Ascending aorta (tissue), 2 donors: ENCODE measurements at regions of chr1 and their contacts with region 1.

Region 1: GRCh38 chr1:201559679-201560162 is 20.8 kb downstream of the NAV1 start:
- DNase-seq: peak in 1 of 2 donors; percentile 86
- H3K4me3 ChIP-seq: no peak overlapping the region
- H3K27ac ChIP-seq: no peak overlapping the region
- H3K4me1 ChIP-seq: peaks cover 0 to 18% of the 10 kb centered on the region in 2 donors
- H3K27me3 ChIP-seq: no peaks in the 10 kb centered on the region
- CTCF ChIP-seq: peak; percentile 89 to 96 (median 89)

Region 2: DNA sequence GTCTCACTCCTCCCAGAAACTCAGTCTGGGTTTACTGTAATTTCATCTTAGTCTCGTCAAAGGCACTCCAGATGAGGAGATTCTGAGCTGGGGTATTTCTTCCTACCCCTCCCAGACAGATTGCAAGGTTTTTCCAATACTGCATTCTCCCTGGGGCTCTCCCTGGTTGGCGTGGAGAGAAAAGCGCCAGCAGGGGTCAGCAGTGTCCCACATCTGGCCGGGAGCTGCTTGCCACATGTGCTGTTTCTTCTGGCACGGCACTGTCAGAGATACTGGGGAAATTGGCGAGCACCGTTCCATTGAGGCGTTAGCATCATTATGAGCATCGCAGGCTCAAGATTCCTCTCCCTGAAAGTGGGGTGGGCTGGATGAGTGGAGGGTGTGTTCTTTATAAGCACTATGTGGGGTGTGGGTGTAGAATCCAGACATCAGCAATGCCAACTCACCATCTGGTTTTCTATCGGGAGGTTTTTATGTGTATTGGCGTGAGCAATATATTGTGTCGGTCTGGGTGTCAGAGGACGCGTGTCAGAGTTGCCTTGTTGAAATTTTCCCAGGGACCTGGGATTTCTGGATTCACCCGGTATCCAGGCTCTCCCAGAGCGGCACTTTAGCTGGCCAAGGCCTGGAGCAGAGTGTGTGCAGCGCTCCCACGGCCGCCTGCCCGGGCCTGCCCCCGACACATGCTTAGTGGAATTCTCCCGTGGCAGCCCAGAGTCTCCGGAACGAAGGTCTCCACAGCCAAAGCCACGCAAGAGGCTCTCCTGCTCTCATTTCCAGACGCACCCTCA is 28.8 kb before region 1 on chr1:
- intact Hi-C with region 1: loop called (anchors 1 kb)
- DNase-seq: peak; percentile 51 to 95
- H3K4me3 ChIP-seq: no peak overlapping the region
- H3K27ac ChIP-seq: peak overlapping the region; percentile 51 to 59
- H3K4me1 ChIP-seq: peaks cover 20 to 45% of the 10 kb centered on the region in 2 donors
- H3K27me3 ChIP-seq: no peaks in the 10 kb centered on the region
- CTCF ChIP-seq: peak; percentile 89 to 96 (median 93)

Region 3: DNA sequence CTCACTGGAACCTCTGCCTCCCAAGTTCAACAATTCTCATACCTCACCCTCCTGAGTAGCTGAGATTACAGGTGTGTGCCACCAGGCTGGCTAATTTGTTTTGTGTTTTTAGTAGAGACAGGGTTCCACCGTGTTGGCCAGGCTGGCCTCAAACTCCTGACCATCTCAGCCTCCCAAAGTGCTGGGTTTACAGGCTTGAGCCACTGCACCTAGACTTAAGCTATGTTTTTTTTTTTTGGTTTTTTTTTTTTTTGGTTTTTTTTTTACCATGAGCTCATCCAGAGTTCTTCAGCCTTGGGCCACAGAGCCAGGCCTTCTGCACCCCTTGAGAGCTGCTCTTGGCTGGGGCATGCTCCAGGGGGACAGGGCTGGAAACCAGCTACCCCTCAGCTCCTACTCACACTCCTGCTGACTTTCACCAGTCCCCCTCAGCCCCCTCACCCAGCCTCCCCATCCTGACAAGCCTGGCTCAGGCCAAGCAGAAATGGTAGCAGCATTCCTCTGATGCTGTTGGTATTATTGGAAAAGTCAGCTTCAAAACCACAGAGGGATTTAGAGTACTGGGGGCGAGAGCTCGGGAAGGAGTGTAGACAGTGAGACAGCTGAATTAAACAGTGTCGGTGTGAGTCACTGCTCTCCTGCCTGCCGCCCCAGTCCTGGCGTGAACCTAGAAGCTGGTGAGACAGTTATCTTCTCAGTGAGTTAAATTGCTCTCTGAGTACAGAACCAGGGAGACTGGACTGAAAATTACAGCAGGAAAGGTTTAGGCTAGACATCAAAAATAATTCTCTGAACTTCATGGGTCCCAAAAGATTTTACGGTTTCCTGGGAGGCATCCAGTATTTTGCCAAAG is 42.9 kb after region 1 on chr1:
- intact Hi-C with region 1: loop called (anchors 5 kb)
- DNase-seq: peak in 1 of 2 donors; percentile 70
- H3K4me3 ChIP-seq: no peak overlapping the region
- H3K27ac ChIP-seq: peak overlapping the region; percentile 48 to 53
- H3K4me1 ChIP-seq: peaks cover 5 to 15% of the 10 kb centered on the region in 2 donors
- H3K27me3 ChIP-seq: no peaks in the 10 kb centered on the region
- CTCF ChIP-seq: no peak

Region 4: DNA sequence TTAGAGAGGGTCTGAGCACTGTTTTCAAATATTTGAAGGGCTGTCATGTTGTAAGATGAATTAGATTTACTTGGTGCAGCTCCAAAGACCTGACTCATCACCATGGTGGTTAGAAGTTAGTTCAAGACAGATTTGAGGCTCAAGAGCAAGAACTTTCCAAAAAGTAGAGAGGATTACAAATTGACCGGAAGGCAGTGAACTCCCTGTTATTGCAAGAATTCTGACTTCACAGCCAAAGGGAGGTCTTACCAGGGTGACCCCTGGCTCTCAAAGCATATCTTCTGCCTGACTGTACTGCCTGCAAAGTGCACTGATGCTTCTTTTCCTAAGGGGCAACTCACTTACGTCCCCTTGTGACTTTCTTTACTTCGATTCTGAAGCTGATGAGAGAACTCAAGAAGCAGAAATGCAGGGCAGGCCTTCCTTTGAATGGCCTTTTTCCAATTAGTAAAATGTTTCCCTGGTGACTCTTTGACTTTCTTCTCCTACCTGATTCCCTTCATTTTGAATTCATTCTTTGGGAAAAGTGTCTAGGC is 65.6 kb after region 1 on chr1:
- intact Hi-C with region 1: loop called (anchors 5 kb)
- DNase-seq: no peak
- H3K4me3 ChIP-seq: no peak overlapping the region
- H3K27ac ChIP-seq: peak overlapping the region; percentile 23 to 63
- H3K4me1 ChIP-seq: peaks cover 12 to 45% of the 10 kb centered on the region in 2 donors
- H3K27me3 ChIP-seq: no peaks in the 10 kb centered on the region
- CTCF ChIP-seq: no peak

Region 5: GRCh38 chr1:201637680-201638079 is 78.0 kb after region 1 on chr1:
- intact Hi-C with region 1: no loop called
- DNase-seq: no peak
- H3K4me3 ChIP-seq: no peak overlapping the region
- H3K27ac ChIP-seq: no peak overlapping the region
- H3K4me1 ChIP-seq: peaks cover 4 to 16% of the 10 kb centered on the region in 2 donors
- H3K27me3 ChIP-seq: no peaks in the 10 kb centered on the region
- CTCF ChIP-seq: no peak

Region 6: GRCh38 chr1:201649761-201650622 is 90.3 kb after region 1 on chr1:
- intact Hi-C with region 1: loop called (anchors 5 kb)
- DNase-seq: peak in 1 of 2 donors; percentile 80
- H3K4me3 ChIP-seq: peak overlapping the region; percentile 61 to 70
- H3K27ac ChIP-seq: peak overlapping the region; percentile 28 to 32
- H3K4me1 ChIP-seq: peaks cover 20 to 26% of the 10 kb centered on the region in 2 donors
- H3K27me3 ChIP-seq: no peaks in the 10 kb centered on the region
- CTCF ChIP-seq: no peak

Region 7: DNA sequence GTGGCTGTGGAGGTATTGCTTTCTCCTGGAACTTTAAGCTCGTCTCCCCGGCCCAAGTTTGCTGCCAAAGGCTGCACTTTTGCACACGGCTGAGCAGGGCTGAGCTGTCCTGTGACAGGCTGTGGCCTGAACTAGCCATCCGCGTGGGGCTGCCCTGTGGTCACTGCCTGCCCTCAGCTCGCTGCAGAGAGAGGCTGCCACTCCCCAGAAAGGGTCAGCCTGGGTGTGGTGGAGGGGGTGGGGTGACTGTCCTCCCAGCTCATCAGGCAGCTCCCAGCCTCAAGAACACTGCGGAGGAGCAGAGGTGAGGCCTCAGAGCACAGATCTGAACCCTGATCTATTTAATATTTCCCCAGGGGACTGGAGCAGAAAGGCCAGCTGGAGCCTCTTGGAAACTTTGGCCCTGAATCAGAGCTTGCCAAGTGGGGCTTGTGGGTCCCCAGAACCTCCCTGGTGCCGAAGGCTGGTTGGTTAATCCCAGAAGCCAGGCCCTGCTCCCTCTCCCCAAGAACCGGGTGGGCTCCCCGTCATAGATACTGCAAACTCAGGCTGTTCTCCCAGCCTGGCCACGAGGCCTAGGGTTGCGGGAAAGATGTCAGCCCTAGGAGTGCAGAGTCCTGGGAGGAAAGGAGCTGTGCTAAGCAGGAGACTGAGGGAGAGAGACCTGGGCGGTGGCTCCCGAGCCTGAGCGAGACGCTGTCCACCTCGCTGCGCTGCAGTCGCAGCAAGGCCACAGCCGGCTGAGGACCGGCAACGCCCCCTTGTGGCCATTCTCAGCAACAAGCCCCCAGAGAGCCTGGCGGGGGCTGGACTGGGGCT is 144.1 kb after region 1 on chr1:
- intact Hi-C with region 1: loop called (anchors 1 kb)
- DNase-seq: peak in 1 of 2 donors; percentile 89
- H3K4me3 ChIP-seq: no peak overlapping the region
- H3K27ac ChIP-seq: peak overlapping the region; percentile 57 to 61
- H3K4me1 ChIP-seq: peaks cover 3 to 14% of the 10 kb centered on the region in 2 donors
- H3K27me3 ChIP-seq: no peaks in the 10 kb centered on the region
- CTCF ChIP-seq: peak; percentile 95 to 97 (median 96)

Region 8: GRCh38 chr1:201792534-201793305 is 233.0 kb after region 1 on chr1:
- intact Hi-C with region 1: loop called (anchors 1 kb)
- DNase-seq: peak in 1 of 2 donors; percentile 91
- H3K4me3 ChIP-seq: no peak overlapping the region
- H3K27ac ChIP-seq: peak overlapping the region; percentile 87 to 88
- H3K4me1 ChIP-seq: peaks cover 23 to 40% of the 10 kb centered on the region in 2 donors
- H3K27me3 ChIP-seq: no peaks in the 10 kb centered on the region
- CTCF ChIP-seq: peak; percentile 93 to 98 (median 95)